ENCODE measurements at regions of chr3 and their contacts with region 1.

Region 1: GRCh38 chr3:196568246-196569002 is at the starts of genes FBXO45 and WDR53:
- DNase-seq: peak; percentile 86 to 96
- H3K4me3 ChIP-seq: peak within 1 kb of the TSS; percentile 92 to 94
- H3K27ac ChIP-seq: peak within 1 kb of the TSS; percentile 85 to 92
- H3K4me1 ChIP-seq: peaks cover 8 to 14% of the 10 kb centered on the region in 2 donors
- H3K27me3 ChIP-seq: no peaks in the 10 kb centered on the region
- CTCF ChIP-seq: no peak
- total RNA-seq, gene FBXO45: 0.64 TPM
- total RNA-seq, gene WDR53: 0.21 TPM

Region 2: DNA sequence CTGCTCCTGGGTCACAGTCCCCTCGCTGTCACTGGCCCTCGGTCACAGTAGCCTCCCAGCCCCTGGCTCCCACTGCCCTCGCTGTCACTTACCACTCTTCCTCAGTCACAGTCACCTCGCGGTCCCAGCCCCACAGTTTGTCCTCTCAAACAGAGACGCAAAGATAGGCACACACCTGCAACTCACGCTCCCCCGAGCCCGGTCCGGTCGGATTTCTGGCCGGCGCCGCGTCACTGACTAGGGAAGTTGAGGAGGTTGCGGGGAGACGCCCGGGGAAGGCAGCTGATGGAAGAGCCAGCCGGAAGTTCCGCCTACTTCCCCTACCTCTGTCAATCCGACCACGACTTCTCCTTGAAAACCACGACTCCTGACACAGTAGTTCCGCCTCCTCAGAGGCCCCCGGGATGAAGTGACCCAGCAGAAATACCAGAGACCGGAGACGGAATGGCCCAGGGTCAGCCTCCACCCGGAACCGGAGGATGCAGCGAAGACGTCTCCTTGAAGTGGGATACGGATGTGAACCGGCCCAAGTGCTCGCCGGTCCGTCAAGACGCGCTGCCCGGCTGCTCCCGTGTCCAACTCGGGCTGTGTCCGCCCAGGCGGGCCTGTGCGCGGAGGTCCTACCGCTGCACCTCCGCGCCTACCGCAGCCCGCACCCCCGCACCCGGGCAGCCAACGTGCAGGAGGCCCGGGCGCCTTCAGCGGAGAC is 280.8 kb before region 1 on chr3 and contains the start of gene PCYT1A:
- intact Hi-C with region 1: loop called (anchors 1 kb)
- DNase-seq: peak; percentile 77 to 96
- H3K4me3 ChIP-seq: peak within 1 kb of the TSS; percentile 75 to 78
- H3K27ac ChIP-seq: peak within 1 kb of the TSS; percentile 82 to 92
- H3K4me1 ChIP-seq: peaks cover 0 to 30% of the 10 kb centered on the region in 2 donors
- H3K27me3 ChIP-seq: no peaks in the 10 kb centered on the region
- CTCF ChIP-seq: no peak
- total RNA-seq, gene PCYT1A: 30.7 TPM

Region 3: GRCh38 chr3:196317687-196318467 is 250.5 kb before region 1 on chr3 and contains the start of gene DYNLT2B:
- intact Hi-C with region 1: loop called (anchors 1 kb)
- DNase-seq: peak; percentile 49 to 91
- H3K4me3 ChIP-seq: peak within 1 kb of the TSS; percentile 92 to 97
- H3K27ac ChIP-seq: peak within 1 kb of the TSS; percentile 88 to 89
- H3K4me1 ChIP-seq: no peaks in the 10 kb centered on the region
- H3K27me3 ChIP-seq: no peaks in the 10 kb centered on the region
- CTCF ChIP-seq: no peak
- total RNA-seq, gene DYNLT2B: not detected

Region 4: DNA sequence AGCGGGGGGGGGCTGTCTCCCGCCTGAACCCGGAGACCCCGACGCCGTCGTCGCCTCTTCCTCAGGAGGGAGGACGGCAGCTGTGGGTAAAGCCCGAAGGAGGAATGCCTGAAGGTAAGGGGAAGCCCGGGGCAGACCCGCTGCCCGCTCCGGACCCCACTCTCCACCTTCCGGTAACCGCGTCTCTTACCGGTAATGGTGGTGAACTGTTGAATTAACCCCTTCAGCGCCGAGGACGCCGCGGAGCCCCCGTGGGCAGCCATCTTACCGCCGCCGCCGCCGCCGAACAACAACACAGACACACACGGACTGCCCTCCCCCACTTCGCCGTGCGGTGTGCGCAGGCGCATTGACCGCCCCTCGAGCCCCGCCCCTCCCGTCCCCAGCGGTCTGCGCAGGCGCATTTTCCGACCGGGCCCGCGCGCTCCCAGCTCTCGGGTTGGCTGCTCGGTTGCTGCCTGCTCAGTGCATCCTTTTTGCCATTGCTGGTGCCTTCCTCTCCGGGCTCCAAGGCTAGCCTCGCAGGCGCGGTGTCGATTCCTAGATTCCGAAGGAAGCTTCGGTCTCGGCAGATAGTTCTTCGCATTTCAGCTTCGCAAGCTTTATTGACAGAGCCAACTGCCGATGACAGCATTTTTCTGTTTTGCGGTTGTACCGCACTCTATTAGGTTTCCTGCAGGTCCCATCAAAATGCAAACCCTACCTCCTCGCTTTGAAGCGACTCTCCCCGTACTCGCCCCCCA is 136.1 kb before region 1 on chr3 and contains the start of gene UBXN7:
- intact Hi-C with region 1: loop called (anchors 2 kb)
- DNase-seq: peak; percentile 71 to 96
- H3K4me3 ChIP-seq: peak within 1 kb of the TSS; percentile 87 to 96
- H3K27ac ChIP-seq: peak within 1 kb of the TSS; percentile 87 to 96
- H3K4me1 ChIP-seq: peaks cover 0 to 6% of the 10 kb centered on the region in 2 donors
- H3K27me3 ChIP-seq: no peaks in the 10 kb centered on the region
- CTCF ChIP-seq: peak in 1 of 3 experiments; percentile 2
- total RNA-seq, gene UBXN7: 7.2 TPM

Region 5: DNA sequence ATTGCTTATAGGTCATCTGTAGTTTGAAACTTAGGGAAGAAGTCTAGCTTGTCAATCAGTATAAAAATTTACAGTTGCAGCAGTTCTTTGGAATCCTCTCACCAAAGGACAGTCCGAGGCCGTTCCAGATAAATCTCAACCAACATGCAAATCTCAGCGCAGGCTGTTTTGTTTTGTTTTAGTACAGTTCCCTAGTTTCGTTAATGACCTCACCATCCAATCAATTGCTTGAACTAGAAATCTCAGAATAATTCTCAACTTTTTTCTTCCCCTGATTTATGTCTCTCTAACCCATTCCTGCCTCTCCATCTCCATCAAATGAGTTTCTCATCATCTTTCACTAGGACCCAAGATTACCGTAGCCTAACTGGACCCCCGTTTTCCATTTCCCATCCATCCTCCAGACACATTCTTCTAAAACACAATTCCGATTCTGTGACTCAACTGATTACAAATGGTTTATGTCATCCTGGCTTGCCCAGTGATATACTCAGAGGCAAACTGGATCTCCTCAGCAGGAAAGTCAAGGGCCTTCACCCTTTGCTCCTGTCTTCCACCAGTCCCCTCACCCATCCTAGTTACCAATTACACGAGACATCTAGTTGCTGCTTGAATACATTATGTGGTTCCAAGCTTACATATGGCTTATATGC is 54.6 kb before region 1 on chr3:
- intact Hi-C with region 1: no loop called
- DNase-seq: no peak
- H3K4me3 ChIP-seq: no peak overlapping the region
- H3K27ac ChIP-seq: no peak overlapping the region
- H3K4me1 ChIP-seq: no peaks in the 10 kb centered on the region
- H3K27me3 ChIP-seq: no peaks in the 10 kb centered on the region
- CTCF ChIP-seq: no peak

Region 6: GRCh38 chr3:196554205-196554604 is 14.2 kb before region 1 on chr3:
- intact Hi-C with region 1: no loop called
- DNase-seq: no peak
- H3K4me3 ChIP-seq: no peak overlapping the region
- H3K27ac ChIP-seq: no peak overlapping the region
- H3K4me1 ChIP-seq: no peaks in the 10 kb centered on the region
- H3K27me3 ChIP-seq: no peaks in the 10 kb centered on the region
- CTCF ChIP-seq: no peak

Region 7: GRCh38 chr3:196867507-196868296 is 299.3 kb after region 1 on chr3 and contains the start of gene SENP5:
- intact Hi-C with region 1: loop called (anchors 2 kb)
- DNase-seq: peak; percentile 45 to 93
- H3K4me3 ChIP-seq: peak within 1 kb of the TSS; percentile 57 to 89
- H3K27ac ChIP-seq: peak within 1 kb of the TSS; percentile 95 to 96
- H3K4me1 ChIP-seq: peaks cover 9 to 12% of the 10 kb centered on the region in 2 donors
- H3K27me3 ChIP-seq: no peaks in the 10 kb centered on the region
- CTCF ChIP-seq: no peak
- total RNA-seq, gene SENP5: 11.0 TPM

Region 8: GRCh38 chr3:196942226-196942914 is 373.9 kb after region 1 on chr3 and contains the start of gene NCBP2:
- intact Hi-C with region 1: loop called (anchors 2 kb)
- DNase-seq: peak; percentile 95 to 99
- H3K4me3 ChIP-seq: peak within 1 kb of the TSS; percentile 93 to 100
- H3K27ac ChIP-seq: peak within 1 kb of the TSS; percentile 88 to 96
- H3K4me1 ChIP-seq: peaks cover 14 to 17% of the 10 kb centered on the region in 2 donors
- H3K27me3 ChIP-seq: no peaks in the 10 kb centered on the region
- CTCF ChIP-seq: peak; percentile 56 to 68 (median 61)
- total RNA-seq, gene NCBP2: 16.9 TPM

Measured in ascending aorta (tissue), 2 donors.